RWPE1 (cell line): ENCODE measurements at regions of chr10 and their contacts with region 1.

Region 1: DNA sequence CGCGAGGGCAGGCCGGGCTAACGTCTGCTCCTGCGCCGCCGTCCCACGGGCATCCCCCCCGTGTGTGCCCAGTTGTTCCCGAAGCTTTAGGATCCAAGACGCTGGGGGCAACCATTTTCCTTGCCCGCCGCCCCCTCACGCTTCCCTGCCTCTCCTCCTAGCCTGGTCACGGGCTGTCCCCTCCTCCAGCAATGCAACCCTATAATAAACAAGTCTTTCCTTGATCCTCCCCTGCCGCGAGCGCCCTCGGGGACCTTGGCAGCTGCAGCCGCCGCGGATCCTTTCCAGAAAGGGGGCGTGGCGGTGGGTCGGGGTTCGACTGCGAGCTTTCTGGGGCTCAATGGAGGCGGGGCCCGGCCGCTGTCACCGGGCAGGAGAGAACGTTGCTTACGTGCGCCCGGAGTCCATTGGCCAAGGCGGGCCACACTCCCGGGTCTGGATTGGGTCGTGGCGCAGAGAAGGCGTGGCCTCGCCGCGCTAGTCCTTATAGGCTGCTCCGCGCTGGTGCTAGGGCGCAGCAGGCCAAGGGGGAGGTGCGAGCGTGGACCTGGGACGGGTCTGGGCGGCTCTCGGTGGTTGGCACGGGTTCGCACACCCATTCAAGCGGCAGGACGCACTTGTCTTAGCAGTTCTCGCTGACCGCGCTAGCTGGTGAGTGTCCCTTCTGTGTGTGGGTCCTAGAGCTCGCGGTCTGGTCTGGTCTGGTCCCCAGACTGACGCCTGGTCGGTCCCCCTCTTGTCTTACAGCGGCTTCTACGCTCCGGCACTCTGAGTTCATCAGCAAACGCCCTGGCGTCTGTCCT is at the start of gene DDIT4:
- DNase-seq: peak; percentile 100
- H3K27ac ChIP-seq: peak within 1 kb of the TSS; percentile 100
- CTCF ChIP-seq: no peak

Region 2: GRCh38 chr10:72126184-72126871 is 147.3 kb before region 1 on chr10:
- CTCF ChIA-PET with region 1: no interaction called
- POLR2A ChIA-PET with region 1: interaction called, 10 read pairs
- DNase-seq: peak; percentile 64
- H3K27ac ChIP-seq: no peak overlapping the region
- CTCF ChIP-seq: no peak; the same call in 1 of the 2 replicates

Region 3: DNA sequence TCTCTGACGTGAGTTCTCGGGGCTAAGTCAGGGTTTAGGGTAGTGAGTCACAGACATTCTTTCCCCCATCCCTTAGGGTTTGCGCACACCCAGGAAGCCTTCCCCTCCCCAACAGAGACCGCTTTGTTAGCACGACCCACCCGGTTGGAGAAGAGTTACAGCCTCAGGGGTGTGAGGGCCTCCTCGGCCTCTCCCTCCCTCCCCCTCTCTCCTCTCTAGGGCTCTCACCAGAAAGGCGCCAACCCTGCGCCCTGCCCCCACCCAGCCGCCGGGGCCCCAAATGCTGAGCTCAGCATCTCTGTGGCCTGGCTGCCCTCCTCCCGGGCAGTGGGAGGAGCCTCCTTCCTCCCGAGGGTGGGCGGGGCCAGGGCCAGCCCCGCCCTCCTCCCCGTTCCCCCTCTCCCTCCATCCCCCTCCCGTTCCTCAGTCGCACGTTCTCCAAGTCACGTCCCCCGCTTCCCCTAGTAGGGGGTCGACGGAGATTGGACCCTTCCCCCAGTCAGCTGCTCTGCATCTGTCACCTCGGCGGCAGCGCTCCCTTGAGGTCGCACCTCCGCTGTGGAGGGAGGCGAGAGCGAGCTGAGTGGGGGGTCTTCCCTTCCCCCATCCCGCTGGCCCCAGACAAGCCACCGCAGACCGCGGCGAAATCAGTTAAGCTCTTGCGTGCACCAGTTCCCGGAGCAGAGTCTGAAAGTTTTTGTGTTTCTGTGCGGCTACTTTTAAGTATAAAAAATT is 12.9 kb before region 1 on chr10:
- CTCF ChIA-PET with region 1: interaction called, 16 read pairs
- POLR2A ChIA-PET with region 1: interaction called, 22 read pairs
- DNase-seq: peak; percentile 97
- H3K27ac ChIP-seq: peak overlapping the region; percentile 100
- CTCF ChIP-seq: no peak

Region 4: DNA sequence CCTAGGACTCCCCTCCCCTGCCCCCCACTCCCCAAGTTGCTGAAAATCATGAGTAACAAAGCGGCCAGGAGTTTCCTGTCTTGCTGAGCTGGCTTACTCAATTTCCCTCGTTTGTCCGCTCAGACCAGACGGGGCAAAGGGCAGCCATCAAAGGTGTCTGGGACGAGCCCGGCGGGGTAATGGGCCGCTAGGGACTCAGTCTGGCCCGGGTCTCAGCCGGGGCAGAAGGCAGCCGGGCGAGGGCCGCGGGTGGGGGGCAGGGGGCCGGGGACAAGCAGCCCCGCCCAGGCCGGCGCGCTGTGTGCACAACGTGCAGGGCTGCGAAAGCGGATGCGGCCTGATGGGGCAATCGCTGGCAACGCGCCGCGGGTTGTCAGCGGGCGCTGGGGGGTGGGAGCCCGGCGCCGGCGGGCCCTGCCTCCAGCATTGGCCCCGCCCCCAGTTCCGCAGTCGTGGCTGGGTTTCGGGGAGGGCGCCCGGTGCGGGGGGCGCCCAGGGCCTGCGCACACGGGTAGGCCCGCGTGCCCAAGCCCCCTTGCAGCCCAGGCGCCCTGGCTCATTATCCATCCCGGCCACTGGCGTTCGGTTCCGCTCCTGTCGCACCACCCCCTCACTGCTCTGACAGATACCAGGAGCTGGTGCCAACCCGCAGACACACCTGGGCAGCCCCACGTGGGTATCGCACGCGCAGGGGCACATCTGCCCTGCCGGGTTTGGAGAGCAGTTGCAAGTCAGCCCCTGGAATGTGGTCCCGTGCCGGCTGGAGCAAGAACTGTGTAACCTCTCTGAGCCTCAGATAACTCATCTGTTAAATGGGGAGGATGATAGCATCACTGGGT is 46.0 kb after region 1 on chr10:
- CTCF ChIA-PET with region 1: interaction called, 5 read pairs
- POLR2A ChIA-PET with region 1: interaction called, 86 read pairs
- DNase-seq: peak; percentile 94
- H3K27ac ChIP-seq: peak overlapping the region; percentile 100
- CTCF ChIP-seq: no peak

Region 5: GRCh38 chr10:72331601-72332422 is 58.2 kb after region 1 on chr10:
- CTCF ChIA-PET with region 1: interaction called, 29 read pairs
- POLR2A ChIA-PET with region 1: interaction called, 46 read pairs
- DNase-seq: peak; percentile 97
- H3K27ac ChIP-seq: peak overlapping the region; percentile 100
- CTCF ChIP-seq: no peak

Region 6: DNA sequence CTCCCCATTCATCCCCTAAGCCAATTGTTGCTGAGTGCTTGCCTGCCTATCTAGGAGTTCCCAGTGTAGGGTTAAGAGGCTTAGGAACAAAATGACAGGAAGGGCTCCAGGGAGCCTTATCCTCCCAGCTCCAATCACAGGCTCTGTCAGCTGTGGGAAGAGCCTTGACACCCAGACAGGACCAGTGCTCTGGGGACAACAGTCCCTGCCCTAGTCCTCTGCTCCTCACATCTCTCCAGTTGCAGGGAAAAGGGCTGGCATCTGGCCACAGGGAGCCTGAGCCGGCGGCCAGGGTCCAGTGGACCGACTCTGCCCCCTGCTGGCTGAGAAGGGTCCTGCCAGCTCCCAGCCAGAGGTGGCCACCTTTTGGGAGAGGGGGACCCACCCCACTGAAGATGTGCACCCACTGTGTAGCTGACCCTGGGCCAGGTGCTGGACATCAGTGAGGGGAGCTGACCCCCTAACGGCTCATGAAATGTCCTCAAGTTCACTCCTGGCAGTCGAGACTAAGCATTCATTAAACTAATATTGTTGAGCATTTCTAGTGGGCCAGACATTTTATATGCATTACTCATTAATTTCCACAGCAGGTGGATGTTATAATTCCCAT is 63.5 kb after region 1 on chr10:
- CTCF ChIA-PET with region 1: interaction called, 29 read pairs
- POLR2A ChIA-PET with region 1: interaction called, 46 read pairs
- DNase-seq: peak; percentile 56
- H3K27ac ChIP-seq: peak overlapping the region; percentile 100
- CTCF ChIP-seq: peak; percentile 95